A549 (cell line): ENCODE measurements at regions of chr19 and their contacts with region 1.

Region 1: GRCh38 chr19:15418588-15419412 is at the start of gene AKAP8L:
- DNase-seq: peak; percentile 97 to 99
- ATAC-seq: peak; percentile 98
- H3K4me3 ChIP-seq: peak within 1 kb of the TSS; percentile 78
- H3K27ac ChIP-seq: peak within 1 kb of the TSS; percentile 85 to 96
- H3K4me1 ChIP-seq: peaks cover 14% of the 10 kb centered on the region
- CTCF ChIP-seq: peak; percentile 33; the same call in 2 of the 3 replicates
- EP300 ChIP-seq: no peak
- POLR2A ChIP-seq: peak; percentile 85
- RAD21 ChIP-seq: peak; percentile 50 to 56
- polyA plus RNA-seq, gene AKAP8L: 28.4 and 40.3 TPM in 2 replicates

Region 2: DNA sequence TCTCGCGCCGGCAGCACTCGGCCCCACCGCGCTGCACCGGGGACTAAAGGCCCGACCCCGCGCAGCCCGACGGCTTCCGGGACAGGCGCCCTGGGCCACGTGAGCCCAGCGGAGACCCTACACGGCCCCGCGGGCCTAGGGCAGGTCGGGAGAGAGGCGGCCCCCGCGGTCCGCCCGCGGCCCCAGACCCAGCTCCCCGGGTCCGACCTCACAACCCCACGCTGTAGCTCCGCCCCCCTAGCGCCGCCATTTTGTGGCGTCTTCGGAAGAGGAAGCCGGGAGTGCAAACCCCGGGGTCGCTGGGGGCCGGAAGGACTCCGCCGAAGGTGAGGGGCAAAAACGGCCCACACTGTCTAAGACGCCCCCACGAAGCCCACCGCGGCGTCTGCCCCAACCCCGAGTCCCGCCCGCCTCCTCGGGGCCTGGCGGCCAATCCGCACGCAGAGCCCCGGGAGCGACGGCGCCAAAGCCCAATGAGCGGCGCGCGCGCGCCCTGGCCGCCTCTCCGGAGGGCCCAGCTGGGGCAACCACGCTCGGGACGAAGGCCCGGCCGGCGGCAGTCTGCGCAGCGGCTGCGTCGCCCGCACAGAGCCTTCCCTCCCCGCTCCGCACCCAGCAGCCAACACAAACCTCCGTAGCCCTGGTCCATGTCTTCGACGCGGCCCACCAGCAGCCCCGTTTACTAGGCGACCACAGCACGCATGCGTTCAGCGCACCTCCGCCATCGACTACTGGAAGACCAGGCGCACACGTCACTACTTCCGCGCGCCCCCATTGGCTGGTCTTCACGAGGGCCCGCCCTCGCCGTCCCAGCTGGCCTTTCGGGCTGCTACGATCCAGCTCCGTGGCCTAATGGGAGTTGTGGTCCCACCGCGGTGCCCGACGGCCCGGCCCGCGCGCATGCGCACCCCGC is 39.5 kb before region 1 on chr19 and contains the start of gene AKAP8:
- CTCF ChIA-PET with region 1: interaction called, 12 read pairs
- POLR2A ChIA-PET with region 1: interaction called, 34 read pairs
- DNase-seq: peak; percentile 92 to 98
- ATAC-seq: peak; percentile 92 to 93
- H3K4me3 ChIP-seq: peak within 1 kb of the TSS; percentile 69
- H3K27ac ChIP-seq: peak within 1 kb of the TSS; percentile 99
- H3K4me1 ChIP-seq: peaks cover 22% of the 10 kb centered on the region
- CTCF ChIP-seq: no peak
- EP300 ChIP-seq: no peak
- POLR2A ChIP-seq: peak; percentile 53
- RAD21 ChIP-seq: no peak
- polyA plus RNA-seq, gene AKAP8: 13.5 and 16.2 TPM in 2 replicates

Region 3: DNA sequence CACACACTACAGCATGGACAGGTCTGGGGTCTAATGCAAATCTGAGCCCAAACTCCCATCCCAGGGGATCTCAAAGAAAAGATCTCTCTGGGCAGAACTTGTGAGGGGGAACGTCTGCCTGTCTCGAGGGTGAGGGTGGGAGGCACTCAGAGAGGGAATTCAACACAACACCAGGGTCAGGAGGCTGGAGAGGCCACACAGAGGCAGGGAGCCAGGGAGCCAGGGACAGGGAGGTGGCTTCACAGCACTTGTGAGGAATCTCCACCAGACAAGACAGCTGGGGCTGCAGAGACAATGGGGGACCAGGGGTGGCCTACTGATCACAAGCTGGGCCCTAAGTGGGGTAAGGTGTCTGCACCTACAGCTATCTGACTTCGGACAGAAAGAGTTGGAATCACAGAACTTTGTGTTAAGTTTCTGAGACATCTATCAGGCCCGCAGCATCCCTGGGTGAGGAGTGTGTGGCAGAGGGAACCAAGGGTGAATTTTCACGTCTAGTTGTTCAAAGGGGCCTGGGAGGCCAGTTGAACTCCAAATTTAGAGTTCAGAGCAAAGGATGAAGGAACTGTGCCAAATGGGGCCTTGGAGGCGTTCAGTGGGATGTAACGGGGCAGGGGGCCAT is 12.7 kb after region 1 on chr19:
- CTCF ChIA-PET with region 1: interaction called, 11 read pairs
- POLR2A ChIA-PET with region 1: interaction called, 8 read pairs
- DNase-seq: no peak
- ATAC-seq: no peak
- H3K4me3 ChIP-seq: peak overlapping the region; percentile 71
- H3K27ac ChIP-seq: peak overlapping the region; percentile 89 to 99
- H3K4me1 ChIP-seq: peaks cover 14% of the 10 kb centered on the region; the same call in 1 of the 3 replicates
- CTCF ChIP-seq: no peak
- EP300 ChIP-seq: no peak
- POLR2A ChIP-seq: no peak
- RAD21 ChIP-seq: no peak

Region 4: DNA sequence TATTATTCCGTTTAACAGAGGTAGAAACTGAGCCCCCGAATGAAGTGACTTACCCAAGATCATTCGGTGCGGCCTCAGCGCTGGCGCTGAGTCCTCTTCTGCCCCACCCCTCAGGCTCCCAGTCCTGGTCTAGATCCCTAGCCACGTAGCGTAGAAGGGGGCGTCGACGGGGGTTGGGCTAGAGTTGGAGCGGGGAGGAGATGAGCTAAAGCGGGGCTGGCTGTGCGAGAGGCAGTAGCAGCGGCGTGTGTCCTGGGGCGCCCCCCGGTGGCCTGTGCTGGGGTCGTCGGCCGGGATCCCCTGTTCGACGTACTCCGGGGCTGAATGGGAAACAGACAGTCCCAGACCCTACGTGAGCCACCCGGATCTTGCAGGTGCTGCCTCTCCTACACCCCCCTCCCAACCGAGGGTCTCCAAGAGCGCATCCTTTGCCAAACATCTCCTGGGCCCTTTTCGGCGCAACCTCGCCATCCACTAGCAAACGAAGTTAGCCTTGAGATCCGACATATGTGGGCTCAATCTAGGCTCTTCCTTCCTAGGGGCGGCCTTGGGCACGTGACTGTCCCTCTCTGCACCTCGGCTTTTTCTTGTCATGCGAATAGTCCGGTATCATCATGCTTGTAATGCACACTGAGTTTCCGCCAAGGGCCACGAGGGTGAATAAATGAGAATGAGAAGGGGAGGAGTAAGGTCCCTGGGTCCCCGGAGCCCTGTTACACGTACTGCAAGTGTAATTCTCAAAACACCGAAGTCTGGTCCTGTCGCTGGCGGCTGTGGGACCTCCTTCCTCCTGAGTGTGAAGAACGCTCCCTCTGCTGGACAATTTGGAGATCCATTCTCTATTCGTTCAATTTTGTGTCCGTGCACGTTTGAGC is 137.2 kb after region 1 on chr19:
- CTCF ChIA-PET with region 1: interaction called, 15 read pairs
- POLR2A ChIA-PET with region 1: interaction called, 14 read pairs
- DNase-seq: peak; percentile 90 to 93
- ATAC-seq: peak; percentile 89 to 95
- H3K4me3 ChIP-seq: peak overlapping the region; percentile 39
- H3K27ac ChIP-seq: peak overlapping the region; percentile 30 to 67; a peak in 4 of 6 replicates
- H3K4me1 ChIP-seq: 0 out of 3 replicates have a peak, but pooled peaks cover 4% of the 10 kb centered on the region
- CTCF ChIP-seq: peak; percentile 71
- EP300 ChIP-seq: no peak
- POLR2A ChIP-seq: no peak
- RAD21 ChIP-seq: peak; percentile 75 to 85

Region 5: DNA sequence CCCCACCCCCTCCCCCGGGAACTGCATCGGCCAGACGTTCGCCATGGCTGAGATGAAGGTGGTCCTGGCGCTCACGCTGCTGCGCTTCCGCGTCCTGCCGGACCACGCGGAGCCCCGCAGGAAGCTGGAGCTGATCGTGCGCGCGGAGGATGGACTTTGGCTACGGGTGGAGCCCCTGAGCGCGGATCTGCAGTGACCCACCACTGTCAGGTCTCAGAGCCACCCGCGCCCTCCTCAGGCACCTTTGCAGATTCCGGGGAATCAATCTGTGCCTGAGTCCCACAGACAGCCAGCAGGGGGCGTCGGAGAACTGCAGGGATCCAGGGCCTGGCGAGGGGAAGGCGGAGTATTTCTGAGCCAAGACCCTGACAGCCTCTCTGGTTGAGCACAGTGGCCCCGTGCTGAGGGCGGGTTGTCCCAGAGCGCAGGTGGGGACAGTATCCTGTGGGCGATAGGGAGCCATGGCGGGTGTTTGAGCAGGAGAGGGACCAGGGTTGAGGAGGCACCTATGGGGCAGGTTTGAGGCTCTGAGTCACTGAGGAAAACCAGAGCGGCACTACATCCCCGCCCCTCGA is 165.8 kb after region 1 on chr19:
- CTCF ChIA-PET with region 1: no interaction called
- POLR2A ChIA-PET with region 1: no interaction called
- DNase-seq: peak; percentile 60 to 69
- ATAC-seq: peak; percentile 98 to 99
- H3K4me3 ChIP-seq: peak overlapping the region; percentile 34
- H3K27ac ChIP-seq: peak overlapping the region in 1 of 2 experiments; percentile 43; a peak in 2 of 6 replicates
- H3K4me1 ChIP-seq: no peaks in the 10 kb centered on the region
- CTCF ChIP-seq: peak; percentile 63
- EP300 ChIP-seq: no peak
- POLR2A ChIP-seq: no peak
- RAD21 ChIP-seq: peak; percentile 66 to 73